CD14-positive monocyte (primary cell): ENCODE measurements at regions of chr12 and their contacts with region 1.

Region 1: GRCh38 chr12:51351913-51352532 is 5.5 kb upstream of the CELA1 start:
- DNase-seq: peak; percentile 24 to 44 (median 27)
- H3K4me3 ChIP-seq: no peak overlapping the region
- H3K4me3 Mint-ChIP-seq: no peak overlapping the region
- H3K27ac ChIP-seq: no peak overlapping the region
- H3K27ac Mint-ChIP-seq: no peak overlapping the region
- H3K4me1 ChIP-seq: no peaks in the 10 kb centered on the region
- H3K4me1 Mint-ChIP-seq: no peaks in the 10 kb centered on the region
- H3K27me3 ChIP-seq: no peaks in the 10 kb centered on the region
- H3K27me3 Mint-ChIP-seq: peaks cover 1 to 3% (median 3%) of the 10 kb centered on the region in 3 donors
- CTCF ChIP-seq: peak; percentile 54

Region 2: DNA sequence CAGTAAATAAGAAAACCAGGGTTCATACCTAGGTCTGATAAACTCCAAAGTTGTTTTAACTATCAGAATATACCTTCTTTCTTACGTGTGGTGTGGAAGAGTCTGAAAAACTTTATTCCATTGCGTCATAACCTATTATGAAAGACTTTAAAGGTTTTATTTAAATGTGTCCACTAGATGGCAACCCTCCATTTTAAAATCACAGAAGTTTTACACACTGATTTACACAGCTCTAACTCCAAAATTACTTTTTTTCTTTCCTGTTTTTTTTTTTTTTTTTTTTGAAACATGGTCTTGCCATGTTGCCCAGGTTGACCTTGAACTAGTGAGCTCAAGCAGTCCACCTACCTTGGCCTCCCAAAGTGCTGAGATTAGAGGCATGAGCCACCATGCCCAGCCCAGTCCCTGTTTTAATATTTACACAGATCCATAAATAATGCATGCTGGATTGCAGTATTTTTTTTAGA is 526.6 kb before region 1 on chr12:
- intact Hi-C with region 1: loop called (anchors 5 to 10 kb)
- DNase-seq: peak; percentile 33 to 73 (median 62)
- H3K4me3 ChIP-seq: no peak overlapping the region
- H3K4me3 Mint-ChIP-seq: no peak overlapping the region
- H3K27ac ChIP-seq: no peak overlapping the region
- H3K27ac Mint-ChIP-seq: peak overlapping the region in 1 of 7 donors; percentile 49
- H3K4me1 ChIP-seq: peaks cover 0 to 3% of the 10 kb centered on the region in 2 donors
- H3K4me1 Mint-ChIP-seq: peaks cover 5% of the 10 kb centered on the region
- H3K27me3 ChIP-seq: no peaks in the 10 kb centered on the region
- H3K27me3 Mint-ChIP-seq: peaks cover 1 to 3% (median 2%) of the 10 kb centered on the region in 3 donors
- CTCF ChIP-seq: peak; percentile 76